PC-9 (cell line): ENCODE measurements at regions of chr1 and their contacts with region 1.

Region 1: DNA sequence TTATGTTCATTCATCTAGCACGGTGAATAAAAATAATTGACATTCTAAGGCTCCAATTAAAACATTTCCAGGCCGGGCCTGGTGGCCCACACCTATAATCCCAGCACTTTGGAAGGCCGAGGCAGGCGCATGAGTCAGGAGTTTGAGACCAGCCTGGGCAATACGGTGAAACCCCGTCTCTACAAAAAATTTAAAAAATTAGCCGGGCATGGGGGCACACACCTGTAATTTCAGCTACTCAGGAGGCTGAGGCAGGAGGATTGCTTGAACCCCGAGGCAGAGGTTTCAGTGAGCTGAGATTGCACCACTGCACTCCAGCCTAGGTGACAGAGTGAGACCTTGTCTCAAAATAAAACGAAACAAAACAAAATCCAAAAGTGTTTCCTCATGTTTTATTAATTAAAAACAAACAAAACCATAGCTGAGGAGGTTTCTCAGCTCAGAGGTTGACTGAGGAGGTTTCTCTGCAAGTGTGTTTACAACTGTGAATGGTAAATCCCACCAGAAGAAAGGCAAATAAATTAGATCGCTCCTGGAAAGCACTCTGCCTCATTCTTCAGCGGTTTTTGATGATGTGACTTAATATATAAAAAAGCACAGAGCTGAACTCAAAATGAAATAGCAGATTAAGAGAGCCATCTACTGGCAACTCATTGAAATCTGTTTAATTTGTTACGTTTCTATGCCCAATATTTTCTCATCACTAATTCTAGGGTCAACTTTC is 37.7 kb upstream of the ATG4C start:
- DNase-seq: peak in 1 of 2 experiments; percentile 39
- H3K4me3 ChIP-seq: peak overlapping the region; percentile 38; the same call in 1 of the 2 replicates
- H3K27ac ChIP-seq: no peak overlapping the region
- H3K4me1 ChIP-seq: no peaks in the 10 kb centered on the region
- H3K27me3 ChIP-seq: no peaks in the 10 kb centered on the region
- CTCF ChIP-seq: peak; percentile 73

Region 2: DNA sequence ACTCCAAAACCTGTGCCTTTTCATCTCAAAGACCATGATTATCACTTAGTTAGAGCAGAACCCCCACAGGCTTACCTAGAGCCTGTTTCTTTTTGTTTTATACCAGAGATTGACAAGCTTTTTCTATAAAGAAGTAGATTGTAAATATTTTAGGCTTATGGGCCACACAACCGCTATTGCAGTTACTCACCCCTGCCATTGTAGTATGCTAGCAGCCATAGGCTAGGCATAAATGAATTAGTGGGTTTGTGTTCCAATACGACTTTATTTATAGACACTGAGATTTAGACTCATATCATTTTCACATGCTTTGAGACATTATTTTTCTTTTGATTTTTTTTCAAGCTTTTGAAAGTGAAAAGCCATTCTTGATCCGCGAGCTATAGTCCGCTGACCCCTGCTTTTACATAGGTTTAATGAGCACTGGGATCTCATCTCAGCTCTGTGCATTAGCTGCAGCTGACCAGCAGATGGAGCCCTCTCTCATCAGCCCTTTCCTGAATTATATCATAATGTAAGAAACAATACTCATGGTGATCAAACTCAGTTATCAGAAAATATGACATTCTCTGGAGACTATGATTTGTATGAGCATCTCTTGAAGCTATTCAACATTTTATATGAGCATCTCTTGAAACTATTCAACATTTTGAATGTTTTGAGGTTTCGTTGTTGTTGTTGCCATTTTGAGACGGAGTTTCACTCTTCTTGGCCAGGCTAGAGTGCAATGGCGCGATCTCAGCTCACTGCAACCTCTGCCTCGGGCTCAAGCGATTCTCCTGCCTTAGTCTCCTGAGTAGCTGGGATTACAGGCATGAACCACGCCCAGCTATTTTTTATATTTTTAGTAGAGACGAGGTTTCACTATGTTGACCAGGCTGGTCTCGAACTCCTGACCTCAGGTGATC is 663.5 kb before region 1 on chr1:
- CTCF ChIA-PET with region 1: no interaction called
- POLR2A ChIA-PET with region 1: no interaction called
- intact Hi-C with region 1: loop called (anchors 5 kb)
- DNase-seq: peak in 1 of 2 experiments; percentile 27
- H3K4me3 ChIP-seq: no peak overlapping the region
- H3K27ac ChIP-seq: no peak overlapping the region
- H3K4me1 ChIP-seq: no peaks in the 10 kb centered on the region
- H3K27me3 ChIP-seq: no peaks in the 10 kb centered on the region
- CTCF ChIP-seq: peak; percentile 91

Region 3: DNA sequence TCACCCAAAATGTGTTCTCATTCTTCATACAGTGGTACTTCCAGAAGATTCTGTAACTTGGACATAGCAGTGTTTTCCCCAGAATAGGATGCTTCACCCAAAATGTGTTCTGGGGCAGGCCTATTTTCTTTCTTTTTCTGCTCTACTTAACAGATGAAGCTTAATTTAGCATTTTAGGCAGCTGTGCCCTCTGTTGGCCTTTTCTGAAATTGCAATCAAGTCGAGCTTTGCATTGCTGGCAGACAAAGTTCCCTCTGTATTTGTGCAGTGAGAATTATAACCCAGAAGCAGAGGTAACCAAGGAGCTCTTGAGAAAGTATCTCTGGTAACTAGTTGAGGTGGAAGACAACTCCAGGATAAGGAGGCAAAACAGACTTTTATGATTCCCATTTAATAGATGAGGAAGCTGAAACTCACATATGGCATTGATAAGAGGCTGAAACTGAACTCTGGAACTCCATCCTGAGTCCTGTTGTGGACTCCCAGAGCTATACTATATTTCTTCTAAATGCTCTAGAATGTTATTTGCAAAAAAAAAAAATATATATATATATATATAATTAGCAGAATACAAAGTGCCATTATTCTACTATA is 601.9 kb before region 1 on chr1:
- CTCF ChIA-PET with region 1: no interaction called
- POLR2A ChIA-PET with region 1: no interaction called
- intact Hi-C with region 1: loop called (anchors 5 kb)
- DNase-seq: peak in 1 of 2 experiments; percentile 49
- H3K4me3 ChIP-seq: no peak overlapping the region
- H3K27ac ChIP-seq: no peak overlapping the region
- H3K4me1 ChIP-seq: no peaks in the 10 kb centered on the region
- H3K27me3 ChIP-seq: no peaks in the 10 kb centered on the region
- CTCF ChIP-seq: peak; percentile 82

Region 4: DNA sequence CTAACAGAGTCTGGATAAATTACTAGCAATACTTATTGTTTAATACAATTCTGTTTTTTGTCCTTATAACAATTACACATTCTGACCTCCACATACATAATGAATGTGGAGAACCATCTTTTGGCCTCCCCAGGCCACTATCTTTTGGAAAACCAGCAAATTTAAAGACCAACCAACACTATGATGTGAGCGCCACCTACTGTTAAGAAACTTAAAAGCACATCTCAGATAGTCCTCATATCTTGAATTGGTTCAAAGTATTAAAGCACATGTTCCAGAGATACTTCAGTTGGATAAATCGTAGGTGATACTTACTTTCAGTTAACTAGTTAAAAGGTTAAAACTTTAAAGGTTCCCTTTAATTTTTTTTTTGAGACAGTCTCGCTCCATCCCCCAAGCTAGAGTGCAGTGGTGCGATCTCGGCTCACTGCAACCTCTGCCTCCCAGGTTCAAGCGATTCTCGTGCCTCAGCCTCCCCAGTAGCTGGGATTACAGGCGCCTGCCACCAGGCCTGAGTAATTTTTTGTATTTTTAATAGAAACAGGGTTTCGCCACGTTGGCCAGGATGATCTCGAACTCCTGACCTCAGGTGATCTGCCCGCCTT is 338.7 kb before region 1 on chr1:
- CTCF ChIA-PET with region 1: no interaction called
- POLR2A ChIA-PET with region 1: no interaction called
- intact Hi-C with region 1: loop called (anchors 10 kb)
- DNase-seq: no peak
- H3K4me3 ChIP-seq: no peak overlapping the region
- H3K27ac ChIP-seq: no peak overlapping the region
- H3K4me1 ChIP-seq: no peaks in the 10 kb centered on the region
- H3K27me3 ChIP-seq: no peaks in the 10 kb centered on the region
- CTCF ChIP-seq: peak; percentile 94

Region 5: DNA sequence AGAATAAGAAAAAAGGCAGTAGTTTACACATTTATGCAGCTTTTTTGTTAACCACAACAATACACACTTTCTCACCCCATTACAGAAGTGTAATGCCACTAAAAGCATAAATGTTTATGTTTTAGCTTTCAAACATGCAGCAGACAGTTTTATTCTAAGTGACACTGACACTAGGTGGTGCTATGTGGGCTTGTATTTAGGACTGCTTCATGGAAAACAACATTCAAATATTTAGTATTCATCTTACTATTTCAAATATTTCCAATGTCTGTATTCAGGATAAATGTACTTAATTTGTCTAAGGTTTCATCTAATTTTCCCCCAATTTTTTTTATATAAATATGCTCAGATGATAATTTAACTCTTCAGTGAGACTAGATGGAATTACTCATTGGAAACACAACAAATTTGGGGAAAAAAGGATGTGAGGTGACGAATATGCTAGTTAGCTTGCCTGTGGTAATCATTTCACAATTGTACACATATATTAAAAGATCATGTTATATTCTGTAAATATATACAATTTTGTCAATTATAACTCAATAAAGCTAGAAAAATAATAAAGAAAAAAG is 238.0 kb before region 1 on chr1:
- CTCF ChIA-PET with region 1: interaction called, 13 read pairs
- POLR2A ChIA-PET with region 1: no interaction called
- intact Hi-C with region 1: loop called (anchors 1 kb)
- DNase-seq: peak; percentile 3 to 37
- H3K4me3 ChIP-seq: no peak overlapping the region
- H3K27ac ChIP-seq: no peak overlapping the region
- H3K4me1 ChIP-seq: no peaks in the 10 kb centered on the region
- H3K27me3 ChIP-seq: no peaks in the 10 kb centered on the region
- CTCF ChIP-seq: peak; percentile 70

Region 6: DNA sequence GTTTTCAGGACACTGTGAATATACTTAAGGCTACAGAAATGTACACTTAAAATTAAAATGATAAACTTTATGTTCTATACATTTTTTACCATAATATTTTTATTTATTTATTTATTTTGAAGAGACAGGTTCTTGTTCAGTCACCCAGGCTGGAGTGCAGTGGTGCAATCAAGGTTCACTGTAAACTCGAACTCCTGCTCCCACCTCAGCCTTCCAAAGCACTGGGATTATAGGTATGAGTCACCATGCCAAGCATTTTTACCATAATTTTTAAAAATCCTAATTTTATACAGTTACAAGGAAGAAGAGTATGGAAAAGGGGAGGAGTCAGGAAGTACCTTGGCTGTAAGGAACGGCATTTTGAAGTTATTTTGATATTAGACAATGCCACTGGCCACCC is 172.6 kb before region 1 on chr1:
- CTCF ChIA-PET with region 1: no interaction called
- POLR2A ChIA-PET with region 1: interaction called, 35 read pairs
- intact Hi-C with region 1: no loop called
- DNase-seq: no peak
- H3K4me3 ChIP-seq: no peak overlapping the region
- H3K27ac ChIP-seq: no peak overlapping the region
- H3K4me1 ChIP-seq: no peaks in the 10 kb centered on the region
- H3K27me3 ChIP-seq: no peaks in the 10 kb centered on the region
- CTCF ChIP-seq: no peak